Activated T-helper 2 cell treated with anti-CD3 and anti-CD28 coated beads, Interferon-gamma antibody, Interleukin-2, Interleukin-4, amounts not matched to agents 10 μg/mL and 5 μg/mL and 100 μg/mL, durations not matched to agents 14 hours and 24 hours and 36 hours (primary cell): ENCODE measurements at regions of chr17 and their contacts with region 1.

Region 1: DNA sequence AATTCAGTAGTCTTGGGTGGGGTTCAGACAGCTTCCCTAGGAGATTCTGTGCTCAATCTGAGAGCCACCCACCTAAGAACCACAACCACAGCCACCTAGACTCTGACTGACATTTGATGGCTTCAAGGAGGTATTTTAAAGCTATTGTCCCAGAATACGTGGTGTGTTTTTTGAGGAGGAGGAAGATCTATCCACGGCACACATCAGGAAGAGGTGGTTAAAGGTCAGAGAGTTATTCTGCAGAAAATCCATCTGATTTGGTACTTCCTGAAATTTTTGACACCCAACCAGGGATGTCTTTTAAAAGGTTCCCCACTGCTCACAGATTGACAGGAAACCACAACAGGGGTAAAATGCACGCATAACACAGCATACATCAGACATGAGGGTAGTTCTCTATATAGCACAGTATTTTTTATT is 25.1 kb downstream of the SMARCE1 start:
- DNase-seq: no peak
- H3K4me3 Mint-ChIP-seq: peak overlapping the region; percentile 6
- H3K27ac Mint-ChIP-seq: peak overlapping the region; percentile 72
- H3K4me1 Mint-ChIP-seq: peaks cover 59% of the 10 kb centered on the region
- H3K27me3 Mint-ChIP-seq: no peaks in the 10 kb centered on the region

Region 2: GRCh38 chr17:40590742-40591141 is 31.8 kb before region 1 on chr17:
- intact Hi-C with region 1: no loop called
- DNase-seq: no peak
- H3K4me3 Mint-ChIP-seq: no peak overlapping the region
- H3K27ac Mint-ChIP-seq: no peak overlapping the region
- H3K4me1 Mint-ChIP-seq: peaks cover 52% of the 10 kb centered on the region
- H3K27me3 Mint-ChIP-seq: no peaks in the 10 kb centered on the region

Region 3: DNA sequence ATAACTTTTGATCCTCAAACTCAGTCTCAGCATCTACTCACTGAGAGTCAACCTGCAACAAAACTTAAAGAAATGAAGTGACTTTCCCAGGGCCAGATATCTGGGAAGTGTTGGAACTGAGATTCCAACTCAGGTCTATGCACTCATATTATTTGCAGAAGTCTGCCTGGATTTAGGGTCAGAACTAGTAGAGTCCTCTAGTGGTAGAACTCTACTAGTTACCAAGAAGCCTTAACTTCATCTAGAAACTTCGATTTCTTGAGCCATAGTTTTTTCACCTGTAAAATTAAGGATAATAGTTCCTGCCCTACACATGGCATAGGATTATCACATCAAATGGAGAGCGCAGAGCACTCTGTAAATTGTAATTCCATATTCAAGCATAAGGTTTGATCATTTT is 104.4 kb after region 1 on chr17:
- intact Hi-C with region 1: loop called (anchors 2 kb)
- DNase-seq: no peak
- H3K4me3 Mint-ChIP-seq: no peak overlapping the region
- H3K27ac Mint-ChIP-seq: no peak overlapping the region
- H3K4me1 Mint-ChIP-seq: no peaks in the 10 kb centered on the region
- H3K27me3 Mint-ChIP-seq: peaks cover 43% of the 10 kb centered on the region

Region 4: DNA sequence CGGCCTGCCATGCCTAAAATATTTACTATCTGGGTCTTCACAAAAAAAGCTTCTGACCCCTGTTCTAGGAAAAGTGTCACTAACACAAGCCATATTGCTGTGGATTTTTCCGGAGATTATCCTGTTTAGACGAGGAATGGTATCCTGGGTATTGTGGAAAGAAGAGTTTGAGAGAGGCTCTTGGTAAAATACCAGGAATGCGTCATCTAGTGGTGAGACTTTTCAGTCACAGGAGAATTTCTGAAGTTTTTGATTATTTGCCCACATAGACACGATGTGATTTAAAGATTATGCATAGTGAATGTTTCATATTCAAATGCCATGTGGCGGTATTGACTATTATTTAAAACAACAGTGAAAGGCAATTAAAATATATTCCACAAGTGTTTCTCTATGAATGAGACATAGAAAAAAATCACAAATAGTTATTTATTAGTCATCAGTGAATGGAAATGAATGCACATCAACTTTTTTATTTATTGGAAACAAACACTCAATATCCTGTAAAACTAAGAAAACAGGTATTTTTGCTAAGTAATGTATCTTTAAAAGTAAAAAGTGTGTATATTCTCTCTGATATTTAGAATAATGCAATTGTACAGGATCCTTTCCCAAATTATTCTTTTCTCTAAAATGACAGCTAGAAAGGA is 169.4 kb after region 1 on chr17:
- intact Hi-C with region 1: loop called (anchors 5 kb)
- DNase-seq: no peak
- H3K4me3 Mint-ChIP-seq: no peak overlapping the region
- H3K27ac Mint-ChIP-seq: no peak overlapping the region
- H3K4me1 Mint-ChIP-seq: no peaks in the 10 kb centered on the region
- H3K27me3 Mint-ChIP-seq: peaks cover 33% of the 10 kb centered on the region

Region 5: DNA sequence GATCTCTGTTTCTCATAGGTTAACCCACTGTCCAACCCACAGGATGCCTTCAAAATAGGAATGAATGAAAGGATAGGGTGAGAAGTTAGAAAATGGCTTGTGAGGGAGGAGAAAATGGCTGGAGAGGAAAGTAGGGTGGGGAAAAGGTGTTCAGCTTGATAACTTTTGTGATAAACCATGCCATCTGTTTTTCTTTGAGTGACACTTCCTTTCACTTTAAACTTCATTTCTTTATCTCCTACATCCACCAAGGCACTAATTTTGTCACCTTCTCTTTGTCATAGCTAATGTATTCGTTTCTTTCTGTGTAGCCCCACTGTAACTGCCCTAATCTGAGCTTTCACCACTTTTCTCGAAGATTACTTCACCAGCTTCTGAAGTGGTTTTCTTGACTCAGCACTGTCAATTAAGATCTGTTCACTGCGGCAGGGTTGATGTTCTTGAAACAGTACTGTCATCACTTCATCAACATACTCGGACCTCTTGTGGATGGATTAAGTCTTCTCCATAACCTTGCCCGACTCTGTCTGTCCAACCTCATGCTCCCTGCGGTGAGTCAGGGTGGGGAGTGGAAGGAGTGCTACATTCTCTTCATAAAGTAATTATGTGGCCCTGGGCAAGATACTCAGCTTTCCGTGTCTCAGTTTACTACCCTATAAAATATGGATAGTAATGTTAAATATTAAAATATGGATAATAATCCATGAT is 205.4 kb after region 1 on chr17:
- intact Hi-C with region 1: no loop called
- DNase-seq: no peak
- H3K4me3 Mint-ChIP-seq: peak overlapping the region; percentile 46
- H3K27ac Mint-ChIP-seq: peak overlapping the region; percentile 67
- H3K4me1 Mint-ChIP-seq: peaks cover 31% of the 10 kb centered on the region
- H3K27me3 Mint-ChIP-seq: no peaks in the 10 kb centered on the region